Transverse colon (tissue), 4 donors: ENCODE measurements at regions of chr7 and their contacts with region 1.

Region 1: DNA sequence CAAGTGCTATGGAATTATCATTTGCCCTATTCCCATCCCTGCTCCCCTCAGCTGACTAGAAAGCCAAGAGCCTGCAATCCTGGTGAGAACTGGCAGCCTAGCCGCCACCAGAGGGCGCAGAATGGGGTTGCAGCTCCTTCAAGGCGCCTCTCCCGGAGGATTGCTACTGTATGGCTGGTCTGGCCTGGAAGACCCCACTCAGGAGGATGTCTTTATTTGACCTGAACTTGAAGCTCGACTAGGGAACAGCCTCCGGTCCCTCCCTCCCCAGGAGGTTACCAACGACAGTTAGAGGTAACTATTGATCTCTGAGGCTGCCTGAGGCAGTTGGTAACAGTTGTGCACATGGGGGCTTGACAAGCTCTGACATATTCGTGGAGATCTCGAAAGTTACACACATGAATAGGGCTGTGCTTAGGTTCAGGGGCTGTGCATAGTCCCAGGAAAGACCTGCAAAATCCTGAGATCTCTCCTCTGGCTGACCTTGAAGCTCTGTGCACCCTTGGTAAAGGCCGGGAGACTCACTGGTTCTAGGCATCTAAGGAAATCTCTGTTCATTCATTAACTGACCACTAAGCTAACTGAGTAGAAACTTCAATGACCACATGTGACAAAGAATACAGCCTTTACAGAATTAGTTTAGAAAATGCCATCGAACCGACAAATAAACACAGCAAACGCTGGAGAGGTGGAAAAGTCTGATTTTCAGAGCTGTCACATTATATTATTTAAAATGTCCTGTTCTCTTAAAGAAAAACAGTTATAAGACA is 65.7 kb downstream of the TSPAN12 start:
- DNase-seq: peak; percentile 75
- H3K4me3 ChIP-seq: no peak overlapping the region
- H3K27ac ChIP-seq: no peak overlapping the region
- H3K4me1 ChIP-seq: no peaks in the 10 kb centered on the region
- H3K27me3 ChIP-seq: no peaks in the 10 kb centered on the region
- CTCF ChIP-seq: peak; percentile 59 to 82 (median 72)
- EP300 ChIP-seq: no peak
- POLR2A ChIP-seq: no peak

Region 2: GRCh38 chr7:120740348-120740747 is 51.9 kb before region 1 on chr7:
- in situ Hi-C with region 1: no loop called
- intact Hi-C with region 1: no loop called
- DNase-seq: no peak
- H3K4me3 ChIP-seq: no peak overlapping the region
- H3K27ac ChIP-seq: no peak overlapping the region
- H3K4me1 ChIP-seq: no peaks in the 10 kb centered on the region
- H3K27me3 ChIP-seq: no peaks in the 10 kb centered on the region
- CTCF ChIP-seq: no peak
- EP300 ChIP-seq: no peak
- POLR2A ChIP-seq: no peak

Region 3: GRCh38 chr7:120857588-120858573 is 65.6 kb after region 1 on chr7 and contains the start of gene TSPAN12:
- in situ Hi-C with region 1: no loop called
- intact Hi-C with region 1: loop called (anchors 10 kb)
- DNase-seq: peak; percentile 79
- H3K4me3 ChIP-seq: peak within 1 kb of the TSS; percentile 70 to 81 (median 78)
- H3K27ac ChIP-seq: peak within 1 kb of the TSS; percentile 93 to 96 (median 95)
- H3K4me1 ChIP-seq: peaks cover 0 to 28% (median 13%) of the 10 kb centered on the region in 4 donors
- H3K27me3 ChIP-seq: no peaks in the 10 kb centered on the region
- CTCF ChIP-seq: peak; percentile 55 to 76 (median 73)
- EP300 ChIP-seq: no peak
- POLR2A ChIP-seq: peak; percentile 79
- total RNA-seq, gene TSPAN12: 34.9 to 55.6 (median 39.5) TPM

Region 4: GRCh38 chr7:120933475-120933874 is 141.2 kb after region 1 on chr7:
- in situ Hi-C with region 1: loop called in 1 of 4 experiments (anchors 10 kb)
- intact Hi-C with region 1: no loop called
- DNase-seq: no peak
- H3K4me3 ChIP-seq: no peak overlapping the region
- H3K27ac ChIP-seq: no peak overlapping the region
- H3K4me1 ChIP-seq: peaks cover 0 to 7% (median 0%) of the 10 kb centered on the region in 4 donors
- H3K27me3 ChIP-seq: no peaks in the 10 kb centered on the region
- CTCF ChIP-seq: no peak
- EP300 ChIP-seq: no peak
- POLR2A ChIP-seq: no peak

Region 5: DNA sequence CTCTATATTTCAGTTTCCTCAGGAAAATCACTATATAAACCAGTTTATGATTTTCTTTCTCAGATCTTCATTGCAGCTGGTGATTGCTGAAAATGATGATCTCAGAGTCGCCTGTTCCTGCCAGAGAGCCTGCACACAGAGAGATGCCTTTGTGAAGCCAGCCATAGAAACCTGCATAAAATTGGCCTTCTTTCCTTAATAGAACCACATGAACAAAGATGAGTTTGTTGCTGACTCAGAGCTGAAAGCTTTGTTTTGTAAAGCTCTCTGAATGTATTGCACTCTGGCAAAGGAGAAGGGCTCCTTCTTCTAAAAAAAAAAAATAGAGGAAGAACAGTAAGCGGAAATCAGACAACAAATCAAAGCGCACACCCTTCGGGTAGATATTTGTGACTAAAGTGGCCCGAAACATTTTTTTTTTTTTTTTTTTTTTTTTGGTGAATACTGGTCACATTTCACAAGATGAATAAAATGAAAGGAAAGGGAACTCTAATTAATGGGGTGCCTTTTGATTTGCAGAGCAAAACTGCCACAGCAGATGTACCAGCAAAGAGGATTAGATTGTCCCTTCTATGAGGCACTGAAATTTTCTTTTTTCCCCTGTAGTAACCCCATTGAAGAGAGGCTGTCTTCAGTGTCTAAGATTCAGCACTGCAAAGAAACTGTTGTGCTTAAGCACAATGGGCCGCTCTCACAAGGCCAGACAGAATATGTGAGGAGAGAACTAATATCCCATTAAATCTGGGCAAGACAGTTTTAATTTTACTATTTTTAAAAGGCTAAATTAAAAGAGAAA is 1005.6 kb after region 1 on chr7:
- in situ Hi-C with region 1: no loop called
- intact Hi-C with region 1: no loop called
- DNase-seq: no peak
- H3K4me3 ChIP-seq: no peak overlapping the region
- H3K27ac ChIP-seq: no peak overlapping the region
- H3K4me1 ChIP-seq: no peaks in the 10 kb centered on the region
- H3K27me3 ChIP-seq: no peaks in the 10 kb centered on the region
- CTCF ChIP-seq: no peak
- EP300 ChIP-seq: no peak
- POLR2A ChIP-seq: no peak